Ovary (tissue), 10 donors: ENCODE measurements at regions of chr6 and their contacts with region 1.

Region 1: DNA sequence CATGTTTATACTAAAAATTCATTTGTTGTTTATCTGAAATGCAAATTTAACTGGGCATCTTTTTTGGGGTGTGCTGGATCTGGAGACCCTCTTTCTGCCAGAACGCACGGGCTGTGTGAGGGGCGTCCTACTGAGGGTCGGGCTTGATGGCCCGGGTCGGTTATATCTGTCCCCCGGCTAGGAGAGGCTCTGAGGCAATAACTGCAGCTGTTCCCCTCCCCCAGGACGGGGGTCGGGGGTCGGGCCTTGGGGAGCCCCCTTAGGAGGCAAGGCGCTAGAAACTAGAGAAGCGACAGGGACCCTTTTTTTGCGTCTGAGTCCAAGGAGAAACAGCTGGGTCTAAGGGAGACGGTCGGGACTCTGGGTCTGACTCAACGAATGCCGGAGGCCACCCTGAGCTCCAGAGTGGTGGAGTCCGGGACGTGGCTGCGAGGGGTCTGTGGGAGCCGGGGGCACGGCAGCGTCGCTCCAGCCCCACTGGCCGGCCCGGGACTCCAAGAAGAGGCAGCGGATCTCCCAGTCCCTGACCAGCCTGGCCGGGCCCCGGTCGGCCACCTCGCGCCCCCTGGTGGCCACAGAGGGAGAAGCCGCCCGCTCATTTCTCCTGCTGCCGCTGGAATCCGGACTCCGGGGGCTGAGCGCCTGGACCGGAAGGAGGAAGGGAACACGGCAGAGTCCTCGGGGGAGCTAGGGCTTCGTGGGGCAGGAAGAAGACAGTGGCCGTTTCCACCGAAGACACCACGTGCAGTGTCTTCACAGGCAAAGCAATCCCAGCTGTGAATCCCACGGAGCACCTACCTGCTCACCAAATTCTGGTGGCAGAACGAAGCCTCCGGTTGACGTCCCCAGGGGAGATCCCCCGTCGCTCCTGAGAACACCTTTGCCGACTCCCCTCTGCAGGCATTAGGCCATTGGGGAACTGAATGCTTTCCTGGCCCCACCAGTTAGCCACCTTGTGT is 24.0 kb upstream of the SCML4 start:
- DNase-seq: peak; percentile 85 to 95 (median 88)
- H3K4me3 ChIP-seq: peak overlapping the region; percentile 31
- H3K27ac ChIP-seq: no peak overlapping the region
- H3K4me1 ChIP-seq: no peaks in the 10 kb centered on the region
- H3K27me3 ChIP-seq: no peaks in the 10 kb centered on the region
- CTCF ChIP-seq: peak; percentile 86 to 93 (median 90)
- EP300 ChIP-seq: no peak
- POLR2A ChIP-seq: no peak

Region 2: DNA sequence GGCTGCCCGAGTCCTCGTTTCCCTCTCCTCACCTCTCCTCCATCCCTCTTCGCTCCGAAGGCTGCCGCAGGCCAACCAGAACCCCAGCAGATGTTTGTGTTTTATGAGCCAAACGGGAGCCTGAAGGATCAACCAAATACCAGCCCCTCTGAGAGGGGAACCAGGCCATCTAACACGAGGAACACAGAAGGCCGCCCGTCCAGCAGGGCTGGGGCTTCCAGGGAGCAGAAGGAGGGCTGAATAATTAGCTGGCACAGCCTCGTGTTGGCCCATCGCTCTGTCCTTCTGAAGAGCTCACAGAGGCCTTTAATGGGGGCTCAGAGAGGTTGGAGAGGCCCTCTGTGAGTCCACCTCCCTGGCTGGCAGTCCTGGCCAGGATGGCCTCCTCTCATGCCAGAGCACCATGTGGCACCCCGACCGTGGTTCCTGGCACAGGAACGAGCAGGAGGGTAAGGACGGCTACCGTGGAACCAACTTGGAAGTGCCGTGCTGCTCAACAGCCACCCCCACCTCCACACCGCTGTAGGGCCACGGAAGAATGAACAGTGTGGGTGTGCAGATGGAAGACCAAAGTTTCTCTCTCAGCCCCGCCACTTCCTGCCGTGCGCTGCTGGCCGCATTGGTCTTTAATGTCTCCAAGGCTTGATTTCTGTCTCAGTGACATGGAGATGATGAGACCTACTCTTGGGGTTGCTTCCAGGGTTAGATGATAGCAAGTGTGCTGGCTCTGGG is 179.2 kb before region 1 on chr6:
- intact Hi-C with region 1: loop called in 2 of 4 experiments (anchors 5 to 10 kb)
- DNase-seq: no peak
- H3K4me3 ChIP-seq: no peak overlapping the region
- H3K27ac ChIP-seq: no peak overlapping the region
- H3K4me1 ChIP-seq: peaks cover 8% of the 10 kb centered on the region
- H3K27me3 ChIP-seq: no peaks in the 10 kb centered on the region
- CTCF ChIP-seq: no peak
- EP300 ChIP-seq: no peak
- POLR2A ChIP-seq: no peak

Region 3: GRCh38 chr6:107674995-107675738 is 173.0 kb before region 1 on chr6:
- intact Hi-C with region 1: loop called in 2 of 4 experiments (anchors 5 to 10 kb)
- DNase-seq: peak; percentile 85 to 92 (median 87)
- H3K4me3 ChIP-seq: no peak overlapping the region
- H3K27ac ChIP-seq: no peak overlapping the region
- H3K4me1 ChIP-seq: peaks cover 5% of the 10 kb centered on the region
- H3K27me3 ChIP-seq: no peaks in the 10 kb centered on the region
- CTCF ChIP-seq: peak; percentile 85 to 95 (median 87)
- EP300 ChIP-seq: no peak
- POLR2A ChIP-seq: no peak

Region 4: GRCh38 chr6:107704347-107705013 is 143.6 kb before region 1 on chr6:
- intact Hi-C with region 1: loop called in 1 of 4 experiments (anchors 10 kb)
- DNase-seq: peak in 1 of 5 donors; percentile 51
- H3K4me3 ChIP-seq: no peak overlapping the region
- H3K27ac ChIP-seq: no peak overlapping the region
- H3K4me1 ChIP-seq: no peaks in the 10 kb centered on the region
- H3K27me3 ChIP-seq: no peaks in the 10 kb centered on the region
- CTCF ChIP-seq: peak; percentile 72 to 85 (median 78)
- EP300 ChIP-seq: no peak
- POLR2A ChIP-seq: no peak